CD4-positive, alpha-beta memory T cell (primary cell): ENCODE measurements at regions of chr20 and their contacts with region 1.

Region 1: DNA sequence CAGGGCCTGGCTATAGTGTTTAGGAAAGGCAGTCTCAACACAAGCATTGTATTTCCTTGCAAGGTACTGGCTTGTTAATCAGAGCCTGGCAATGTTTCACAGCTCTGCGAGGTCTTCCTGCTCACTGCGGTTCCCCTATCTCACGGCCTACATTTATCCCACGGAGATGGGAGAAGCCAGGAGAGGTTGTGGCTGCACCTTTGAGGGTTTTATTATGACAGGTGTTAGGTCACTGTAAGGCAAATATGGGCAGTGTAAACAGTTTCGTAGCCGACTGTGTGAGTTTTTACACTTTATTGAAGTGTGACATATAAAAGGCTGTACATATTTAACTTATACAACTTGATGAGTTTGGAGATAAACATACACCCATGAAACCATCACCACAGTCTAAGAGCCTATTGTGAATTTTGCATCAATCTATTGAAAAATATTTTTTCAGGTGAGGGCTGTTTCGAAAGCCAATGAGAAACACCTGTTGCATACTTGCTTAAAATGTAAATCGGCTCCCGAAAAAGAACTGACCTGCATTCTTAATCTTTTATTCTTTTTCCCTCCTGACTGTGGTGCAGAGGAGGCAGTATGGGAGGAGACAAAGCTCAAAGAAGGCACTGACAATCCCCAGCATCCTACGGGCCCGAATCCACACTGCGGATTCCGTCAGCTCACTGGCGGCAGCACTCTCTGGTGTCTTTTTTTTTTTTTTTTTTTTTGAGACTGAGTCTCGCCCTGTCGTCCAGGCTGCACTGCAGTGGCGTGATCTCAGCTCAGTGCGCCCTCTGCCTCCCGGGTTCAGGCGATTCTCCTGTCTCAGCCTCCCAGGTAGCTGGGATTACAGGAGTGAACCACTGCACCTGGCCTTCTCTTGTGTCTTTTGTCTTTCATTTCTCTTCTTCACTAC is 7.5 kb upstream of the RBM38 start:
- DNase-seq: no peak
- H3K4me3 ChIP-seq: no peak overlapping the region
- H3K4me3 Mint-ChIP-seq: no peak overlapping the region
- H3K27ac ChIP-seq: no peak overlapping the region
- H3K27ac Mint-ChIP-seq: peak overlapping the region in 2 of 7 donors; percentile 53 to 63
- H3K4me1 ChIP-seq: peaks cover 18% of the 10 kb centered on the region
- H3K4me1 Mint-ChIP-seq: peaks cover 12 to 27% (median 20%) of the 10 kb centered on the region in 4 donors
- H3K27me3 ChIP-seq: no peaks in the 10 kb centered on the region
- H3K27me3 Mint-ChIP-seq: no peaks in the 10 kb centered on the region

Region 2: DNA sequence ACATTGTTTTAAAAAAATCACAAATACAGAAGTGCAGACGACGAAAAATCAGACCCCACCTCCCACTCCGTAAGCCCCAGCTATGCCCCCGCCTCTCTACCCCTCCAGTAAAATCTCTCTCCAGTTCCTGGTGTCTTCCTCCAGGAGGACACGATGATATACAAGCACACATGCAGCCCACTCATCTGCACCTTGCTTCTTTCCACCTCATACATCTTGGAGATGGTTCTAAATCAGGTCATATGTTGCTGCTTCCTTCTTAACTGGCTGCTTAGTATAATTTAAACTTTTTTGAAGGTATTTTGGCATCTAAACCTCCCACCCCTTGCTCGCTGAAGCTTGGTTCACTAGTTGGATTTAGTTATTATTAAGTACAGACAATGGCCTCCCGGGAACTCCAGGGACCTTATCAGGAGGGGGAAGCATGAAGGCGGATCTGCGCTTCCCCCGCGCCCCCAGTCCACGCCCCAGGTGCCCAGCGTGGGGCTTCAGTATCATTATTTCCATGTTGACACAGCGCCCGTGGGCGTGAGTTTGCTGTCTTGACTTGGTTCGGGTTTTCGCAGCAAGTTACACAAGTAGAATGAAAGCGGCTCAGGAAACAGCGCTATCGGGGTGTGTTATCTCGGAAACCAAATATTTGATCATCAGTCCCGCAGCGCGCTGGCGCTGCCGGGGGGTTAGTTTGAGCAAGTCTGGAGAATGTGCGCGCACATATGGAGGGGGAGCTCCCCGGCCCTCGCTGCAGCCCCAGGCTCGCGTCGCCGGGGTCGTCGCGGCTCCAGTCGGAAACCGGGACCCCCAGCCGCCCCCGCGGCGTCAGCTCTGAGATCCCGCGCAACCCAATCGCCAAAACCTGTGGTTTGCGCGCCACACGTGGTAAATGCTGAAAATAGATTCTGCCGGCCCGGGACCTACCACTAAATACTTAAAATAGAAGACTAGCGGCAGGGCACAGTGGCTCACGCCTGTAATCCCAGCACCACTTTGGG is 119.6 kb before region 1 on chr20:
- CTCF ChIA-PET with region 1: no interaction called
- POLR2A ChIA-PET with region 1: no interaction called
- intact Hi-C with region 1: no loop called
- DNase-seq: no peak
- H3K4me3 ChIP-seq: no peak overlapping the region
- H3K4me3 Mint-ChIP-seq: no peak overlapping the region
- H3K27ac ChIP-seq: no peak overlapping the region
- H3K27ac Mint-ChIP-seq: no peak overlapping the region
- H3K4me1 ChIP-seq: no peaks in the 10 kb centered on the region
- H3K4me1 Mint-ChIP-seq: peaks cover 3 to 9% (median 5%) of the 10 kb centered on the region in 4 donors
- H3K27me3 ChIP-seq: peaks cover 5% of the 10 kb centered on the region
- H3K27me3 Mint-ChIP-seq: peaks cover 47 to 57% of the 10 kb centered on the region in 2 donors

Region 3: DNA sequence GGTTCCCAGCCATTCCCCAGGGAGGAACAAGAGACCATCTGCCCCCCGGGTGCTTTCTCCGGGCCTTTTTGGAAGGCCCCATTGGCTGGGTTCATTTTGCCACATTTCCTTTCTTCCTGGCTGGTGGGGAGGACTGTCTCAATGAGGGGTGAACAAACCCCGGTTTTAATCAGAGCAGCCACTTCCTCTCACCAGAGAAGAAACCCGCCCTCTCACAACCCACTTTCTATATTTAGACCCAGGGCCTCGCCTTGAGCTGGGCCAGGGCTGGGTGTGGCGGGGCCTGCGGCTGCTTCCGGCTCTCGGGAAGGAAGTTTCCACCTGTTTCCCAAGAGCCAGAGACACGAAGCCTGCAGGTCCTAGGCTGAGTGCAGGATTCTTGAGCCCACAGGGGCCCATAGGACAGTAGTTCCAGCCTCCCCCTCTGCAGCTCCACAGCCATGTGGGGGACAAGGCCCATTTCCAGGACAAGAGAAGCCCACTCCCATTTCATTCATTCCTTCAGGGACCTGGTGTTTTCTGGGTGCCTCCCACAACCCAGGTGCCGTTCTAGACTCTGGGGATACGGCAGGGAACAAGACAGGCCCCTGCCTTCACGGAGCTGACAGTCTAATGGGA is 49.3 kb after region 1 on chr20:
- CTCF ChIA-PET with region 1: interaction called, 92 read pairs
- POLR2A ChIA-PET with region 1: interaction called, 117 read pairs
- intact Hi-C with region 1: loop called (anchors 1 kb)
- DNase-seq: peak; percentile 72 to 81 (median 77)
- H3K4me3 ChIP-seq: peak overlapping the region in 1 of 2 donors; percentile 44
- H3K4me3 Mint-ChIP-seq: peak overlapping the region; percentile 71 to 89 (median 78)
- H3K27ac ChIP-seq: peak overlapping the region; percentile 43
- H3K27ac Mint-ChIP-seq: peak overlapping the region; percentile 83 to 95 (median 92)
- H3K4me1 ChIP-seq: peaks cover 65% of the 10 kb centered on the region
- H3K4me1 Mint-ChIP-seq: peaks cover 39 to 70% (median 61%) of the 10 kb centered on the region in 4 donors
- H3K27me3 ChIP-seq: no peaks in the 10 kb centered on the region
- H3K27me3 Mint-ChIP-seq: no peaks in the 10 kb centered on the region

Region 4: GRCh38 chr20:57450419-57450818 is 66.7 kb after region 1 on chr20:
- CTCF ChIA-PET with region 1: no interaction called
- POLR2A ChIA-PET with region 1: no interaction called
- intact Hi-C with region 1: no loop called
- DNase-seq: no peak
- H3K4me3 ChIP-seq: no peak overlapping the region
- H3K4me3 Mint-ChIP-seq: peak overlapping the region in 5 of 8 donors; percentile 29 to 64 (median 57)
- H3K27ac ChIP-seq: no peak overlapping the region
- H3K27ac Mint-ChIP-seq: no peak overlapping the region
- H3K4me1 ChIP-seq: peaks cover 39% of the 10 kb centered on the region
- H3K4me1 Mint-ChIP-seq: peaks cover 19 to 35% (median 30%) of the 10 kb centered on the region in 4 donors
- H3K27me3 ChIP-seq: no peaks in the 10 kb centered on the region
- H3K27me3 Mint-ChIP-seq: peaks cover 0 to 2% of the 10 kb centered on the region in 2 donors

Region 5: DNA sequence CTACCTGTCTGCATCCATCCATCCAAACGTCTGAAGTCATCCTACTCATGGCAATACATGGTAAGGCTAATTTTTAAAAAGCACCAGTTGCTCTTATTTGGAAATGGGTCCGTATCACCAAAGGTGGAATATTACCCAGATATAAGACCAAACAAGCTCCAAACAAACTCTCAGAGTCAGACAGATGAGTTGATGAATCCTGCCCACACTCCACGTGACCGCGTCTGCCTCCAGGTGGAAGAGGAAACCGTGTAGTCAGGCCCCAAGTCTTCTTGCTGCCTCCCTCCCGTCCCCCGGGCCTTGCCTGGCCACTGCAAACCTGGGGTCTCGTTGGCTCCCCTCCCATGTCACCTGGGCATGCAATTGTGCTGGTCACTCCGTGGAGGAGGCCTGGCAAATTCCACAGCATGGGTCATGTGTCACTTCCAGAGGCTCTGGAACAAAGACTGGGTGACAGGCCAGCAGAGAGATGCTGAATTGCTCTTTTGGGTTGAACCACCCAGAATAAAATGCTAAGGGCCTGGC is 109.5 kb after region 1 on chr20:
- CTCF ChIA-PET with region 1: interaction called, 48 read pairs
- POLR2A ChIA-PET with region 1: interaction called, 5 read pairs
- intact Hi-C with region 1: loop called (anchors 1 kb)
- DNase-seq: no peak
- H3K4me3 ChIP-seq: no peak overlapping the region
- H3K4me3 Mint-ChIP-seq: no peak overlapping the region
- H3K27ac ChIP-seq: no peak overlapping the region
- H3K27ac Mint-ChIP-seq: no peak overlapping the region
- H3K4me1 ChIP-seq: peaks cover 4% of the 10 kb centered on the region
- H3K4me1 Mint-ChIP-seq: peaks cover 4 to 7% (median 5%) of the 10 kb centered on the region in 4 donors
- H3K27me3 ChIP-seq: no peaks in the 10 kb centered on the region
- H3K27me3 Mint-ChIP-seq: peaks cover 10 to 14% of the 10 kb centered on the region in 2 donors

Region 6: DNA sequence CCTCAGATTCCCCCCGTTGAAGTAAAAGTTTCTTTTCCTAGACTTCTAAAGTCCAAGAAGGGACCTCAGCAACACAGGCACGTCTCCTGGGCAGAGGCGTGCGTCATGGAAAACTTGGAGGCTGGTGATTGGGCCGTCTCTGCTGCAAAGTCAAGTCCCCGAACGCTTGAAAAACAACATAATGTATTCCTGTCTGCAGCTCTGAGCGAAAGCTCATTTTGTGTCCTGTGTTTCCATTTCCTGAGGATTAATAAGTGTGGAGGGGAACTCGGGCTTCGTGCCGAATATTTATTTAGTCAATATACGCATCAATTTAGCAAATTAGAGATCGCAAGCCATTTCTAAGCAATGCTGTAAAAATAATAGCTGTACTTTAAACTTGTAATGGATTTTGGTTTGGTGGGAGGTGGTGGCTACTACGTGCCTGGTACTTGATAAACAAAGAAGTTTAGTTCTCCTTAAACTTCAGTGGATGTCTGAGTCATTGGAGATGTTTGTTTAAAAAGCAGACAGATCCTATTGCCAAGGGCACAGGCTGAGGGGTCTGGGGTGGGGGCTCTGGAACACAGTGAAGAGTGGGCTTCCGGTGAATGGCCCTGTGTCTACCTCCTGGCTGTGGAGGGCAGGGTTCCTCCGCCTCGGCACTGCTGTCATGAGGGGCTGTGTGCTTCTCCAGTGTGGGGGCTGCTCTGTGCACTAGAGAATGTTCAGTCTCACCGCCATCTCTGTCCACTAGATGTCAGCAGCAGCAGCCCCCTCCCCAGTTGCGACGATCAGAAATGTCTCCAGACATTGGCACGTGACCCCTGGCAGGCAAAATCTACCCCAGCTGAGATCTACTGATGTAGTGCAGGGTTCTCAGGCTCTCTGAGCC is 199.0 kb after region 1 on chr20:
- CTCF ChIA-PET with region 1: no interaction called
- POLR2A ChIA-PET with region 1: no interaction called
- intact Hi-C with region 1: no loop called
- DNase-seq: no peak
- H3K4me3 ChIP-seq: no peak overlapping the region
- H3K4me3 Mint-ChIP-seq: no peak overlapping the region
- H3K27ac ChIP-seq: no peak overlapping the region
- H3K27ac Mint-ChIP-seq: no peak overlapping the region
- H3K4me1 ChIP-seq: no peaks in the 10 kb centered on the region
- H3K4me1 Mint-ChIP-seq: no peaks in the 10 kb centered on the region
- H3K27me3 ChIP-seq: peaks cover 6% of the 10 kb centered on the region
- H3K27me3 Mint-ChIP-seq: peaks cover 37 to 62% of the 10 kb centered on the region in 2 donors